Activated CD8-positive, alpha-beta memory T cell treated with anti-CD3 and anti-CD28 coated beads, Interleukin-2, amount 10 ng/mL, durations not matched to agents 7 days and 5 days (primary cell): ENCODE measurements at regions of chr3 and their contacts with region 1.

Region 1: GRCh38 chr3:133448478-133449122 is 48.7 kb downstream of the BFSP2 start:
- DNase-seq: peak; percentile 87
- ATAC-seq: peak; percentile 85
- H3K4me3 Mint-ChIP-seq: no peak overlapping the region
- H3K27ac Mint-ChIP-seq: peak overlapping the region; percentile 88
- H3K4me1 Mint-ChIP-seq: peaks cover 53% of the 10 kb centered on the region
- H3K27me3 Mint-ChIP-seq: no peaks in the 10 kb centered on the region

Region 2: DNA sequence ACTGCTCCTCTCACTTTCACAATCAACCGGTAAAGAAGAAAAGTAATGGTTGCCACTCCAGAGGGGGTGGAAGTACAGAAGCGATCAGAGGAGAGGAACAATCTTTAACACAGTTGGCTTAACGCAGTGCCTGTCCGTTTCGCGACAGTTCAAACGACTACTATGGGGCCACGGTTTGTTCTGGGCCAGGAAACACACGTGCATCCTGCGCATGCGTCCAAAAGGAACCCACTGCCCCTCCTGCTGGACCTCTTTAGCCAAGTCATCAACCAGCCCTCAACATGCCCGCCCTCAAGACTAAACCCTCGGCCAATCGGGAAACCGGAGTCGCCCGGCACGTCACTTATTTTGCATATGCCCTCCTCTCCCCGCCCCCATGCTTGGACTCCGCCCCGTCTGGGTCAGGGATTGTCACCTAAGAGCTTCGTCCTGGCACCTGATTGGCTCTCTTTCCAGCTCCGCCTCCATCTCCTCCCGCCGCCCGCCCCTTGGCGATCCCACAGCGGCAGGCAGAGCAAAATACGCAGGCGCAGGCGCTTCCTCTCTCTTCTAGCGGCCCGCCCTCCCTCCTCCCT is 124.5 kb after region 1 on chr3:
- CTCF ChIA-PET with region 1: interaction called, 10 read pairs
- DNase-seq: peak; percentile 100
- ATAC-seq: peak; percentile 82
- H3K4me3 Mint-ChIP-seq: peak overlapping the region; percentile 78
- H3K27ac Mint-ChIP-seq: peak overlapping the region; percentile 100
- H3K4me1 Mint-ChIP-seq: peaks cover 43% of the 10 kb centered on the region
- H3K27me3 Mint-ChIP-seq: no peaks in the 10 kb centered on the region